PC-9 (cell line): ENCODE measurements at regions of chr13 and their contacts with region 1.

Region 1: DNA sequence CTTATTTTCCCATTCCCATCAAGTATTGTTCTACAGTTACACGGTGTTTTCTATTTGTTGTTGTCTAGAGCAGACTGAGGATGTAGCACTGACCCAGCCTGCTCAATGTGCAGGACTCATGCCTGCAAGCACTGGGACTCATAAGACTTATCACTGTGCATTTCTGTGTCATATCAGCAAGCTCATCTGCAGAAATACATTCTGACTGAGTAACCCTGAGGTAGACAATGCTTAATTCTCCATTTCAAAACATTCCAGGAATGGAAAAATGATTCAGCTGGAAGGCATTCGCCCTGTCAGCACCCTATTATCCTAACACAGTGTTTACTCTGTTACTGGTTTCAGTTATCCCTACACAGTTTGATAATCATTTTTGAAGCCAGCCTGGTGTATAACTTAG is 2506.4 kb downstream of the PCDH9 start:
- DNase-seq: peak; percentile 72 to 95
- H3K4me3 ChIP-seq: no peak overlapping the region
- H3K27ac ChIP-seq: peak overlapping the region; percentile 59
- H3K4me1 ChIP-seq: peaks cover 23% of the 10 kb centered on the region
- H3K27me3 ChIP-seq: no peaks in the 10 kb centered on the region
- CTCF ChIP-seq: no peak

Region 2: GRCh38 chr13:64529874-64530485 is 193.7 kb before region 1 on chr13:
- CTCF ChIA-PET with region 1: no interaction called
- POLR2A ChIA-PET with region 1: no interaction called
- intact Hi-C with region 1: no loop called
- DNase-seq: no peak
- H3K4me3 ChIP-seq: no peak overlapping the region
- H3K27ac ChIP-seq: no peak overlapping the region
- H3K4me1 ChIP-seq: no peaks in the 10 kb centered on the region
- H3K27me3 ChIP-seq: no peaks in the 10 kb centered on the region
- CTCF ChIP-seq: peak; percentile 70

Region 3: DNA sequence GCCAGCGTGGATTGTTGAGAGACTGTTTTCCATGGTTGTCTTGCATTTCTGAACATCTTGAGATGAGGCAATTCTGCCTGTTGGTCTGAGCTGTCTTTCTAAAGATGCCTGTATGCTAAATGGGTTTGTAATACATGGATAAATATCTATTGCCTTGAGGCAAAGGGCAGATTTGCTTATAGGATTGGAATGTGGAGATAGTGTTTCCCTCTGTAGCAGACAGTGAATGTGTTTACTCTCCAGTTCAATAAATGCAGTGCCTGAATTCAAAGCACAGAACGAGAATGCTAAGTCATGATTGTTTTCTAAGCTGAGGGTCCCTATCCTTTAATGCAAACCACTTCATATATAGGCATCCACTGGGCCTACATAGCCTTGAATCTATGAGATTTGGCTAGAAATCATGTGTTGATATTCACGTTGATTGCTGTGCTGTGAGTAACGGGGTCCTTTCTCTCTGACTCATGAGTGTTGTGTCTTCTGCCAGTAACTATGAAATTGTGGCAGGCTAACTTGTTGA is 48.4 kb before region 1 on chr13:
- CTCF ChIA-PET with region 1: no interaction called
- POLR2A ChIA-PET with region 1: no interaction called
- intact Hi-C with region 1: loop called (anchors 1 kb)
- DNase-seq: peak; percentile 36 to 84
- H3K4me3 ChIP-seq: no peak overlapping the region
- H3K27ac ChIP-seq: peak overlapping the region; percentile 71
- H3K4me1 ChIP-seq: peaks cover 10% of the 10 kb centered on the region
- H3K27me3 ChIP-seq: no peaks in the 10 kb centered on the region
- CTCF ChIP-seq: no peak

Region 4: DNA sequence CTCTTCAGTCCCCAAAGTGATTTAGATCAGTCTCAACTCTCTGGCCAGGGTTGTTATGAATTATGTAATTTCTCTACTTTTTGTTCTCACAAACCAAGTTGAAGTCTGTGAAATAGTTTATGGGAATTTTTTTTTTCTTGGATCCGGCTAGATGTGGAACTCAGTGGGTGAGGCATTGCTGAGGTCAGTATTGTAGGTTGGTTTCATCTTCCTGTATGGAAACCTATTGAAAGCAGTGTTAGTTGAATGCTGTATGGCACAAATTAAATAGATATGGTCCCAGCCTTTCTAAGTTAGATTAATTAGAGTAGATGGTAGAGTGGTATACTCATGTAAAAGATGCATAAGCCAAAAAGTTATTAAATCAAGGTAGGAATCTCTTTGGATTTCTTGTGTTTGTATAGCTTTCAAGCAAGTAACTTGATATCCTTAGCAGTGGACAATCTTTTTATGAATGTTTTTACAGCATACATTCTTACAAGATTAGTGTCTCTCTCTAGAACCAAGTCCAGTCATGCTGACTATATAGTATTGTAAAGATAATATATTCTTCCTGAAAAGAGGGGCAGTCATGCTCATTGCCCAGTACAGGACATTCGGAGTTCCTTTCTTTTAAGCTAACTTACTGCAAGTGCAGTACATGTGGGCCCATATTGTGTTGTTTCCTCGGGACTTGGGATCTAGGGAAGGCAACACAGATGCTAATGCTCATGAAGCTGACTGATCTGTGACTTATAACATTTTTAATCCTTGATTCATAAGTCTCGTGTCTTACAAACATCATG is 34.6 kb before region 1 on chr13:
- CTCF ChIA-PET with region 1: no interaction called
- POLR2A ChIA-PET with region 1: interaction called, 6 read pairs
- intact Hi-C with region 1: loop called (anchors 1 kb)
- DNase-seq: peak; percentile 25 to 78
- H3K4me3 ChIP-seq: no peak overlapping the region
- H3K27ac ChIP-seq: peak overlapping the region; percentile 93
- H3K4me1 ChIP-seq: peaks cover 26% of the 10 kb centered on the region
- H3K27me3 ChIP-seq: no peaks in the 10 kb centered on the region
- CTCF ChIP-seq: no peak

Region 5: DNA sequence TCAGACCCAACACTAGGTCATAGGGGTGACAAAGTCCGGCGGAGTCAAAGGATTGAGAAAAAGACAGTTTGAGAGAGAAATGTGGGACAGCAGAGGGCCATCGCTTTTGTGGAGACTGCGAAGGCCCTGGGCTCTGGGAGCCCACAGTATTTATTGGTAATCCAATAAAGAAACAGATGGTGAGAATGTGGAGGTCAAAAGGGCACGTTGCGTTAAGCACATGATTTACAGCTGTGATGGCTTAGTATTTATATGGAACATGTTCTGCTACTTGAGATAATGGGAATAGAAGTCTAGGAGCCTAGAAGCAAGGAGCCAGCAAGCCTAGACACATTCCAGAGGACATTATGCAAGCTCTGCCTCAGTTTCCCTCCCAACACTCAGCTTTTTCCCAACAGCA is 14.6 kb before region 1 on chr13:
- CTCF ChIA-PET with region 1: interaction called, 18 read pairs
- POLR2A ChIA-PET with region 1: interaction called, 3 read pairs
- intact Hi-C with region 1: no loop called
- DNase-seq: no peak
- H3K4me3 ChIP-seq: no peak overlapping the region
- H3K27ac ChIP-seq: no peak overlapping the region
- H3K4me1 ChIP-seq: no peaks in the 10 kb centered on the region; the same call in 1 of the 2 replicates
- H3K27me3 ChIP-seq: no peaks in the 10 kb centered on the region
- CTCF ChIP-seq: no peak

Region 6: GRCh38 chr13:65133094-65133493 is 409.4 kb after region 1 on chr13:
- CTCF ChIA-PET with region 1: no interaction called
- POLR2A ChIA-PET with region 1: no interaction called
- intact Hi-C with region 1: no loop called
- DNase-seq: peak in 1 of 2 experiments; percentile 26
- H3K4me3 ChIP-seq: no peak overlapping the region
- H3K27ac ChIP-seq: no peak overlapping the region
- H3K4me1 ChIP-seq: no peaks in the 10 kb centered on the region
- H3K27me3 ChIP-seq: no peaks in the 10 kb centered on the region
- CTCF ChIP-seq: no peak